Aorta (tissue), 5 donors: ENCODE measurements at regions of chr2 and their contacts with region 1.

Region 1: DNA sequence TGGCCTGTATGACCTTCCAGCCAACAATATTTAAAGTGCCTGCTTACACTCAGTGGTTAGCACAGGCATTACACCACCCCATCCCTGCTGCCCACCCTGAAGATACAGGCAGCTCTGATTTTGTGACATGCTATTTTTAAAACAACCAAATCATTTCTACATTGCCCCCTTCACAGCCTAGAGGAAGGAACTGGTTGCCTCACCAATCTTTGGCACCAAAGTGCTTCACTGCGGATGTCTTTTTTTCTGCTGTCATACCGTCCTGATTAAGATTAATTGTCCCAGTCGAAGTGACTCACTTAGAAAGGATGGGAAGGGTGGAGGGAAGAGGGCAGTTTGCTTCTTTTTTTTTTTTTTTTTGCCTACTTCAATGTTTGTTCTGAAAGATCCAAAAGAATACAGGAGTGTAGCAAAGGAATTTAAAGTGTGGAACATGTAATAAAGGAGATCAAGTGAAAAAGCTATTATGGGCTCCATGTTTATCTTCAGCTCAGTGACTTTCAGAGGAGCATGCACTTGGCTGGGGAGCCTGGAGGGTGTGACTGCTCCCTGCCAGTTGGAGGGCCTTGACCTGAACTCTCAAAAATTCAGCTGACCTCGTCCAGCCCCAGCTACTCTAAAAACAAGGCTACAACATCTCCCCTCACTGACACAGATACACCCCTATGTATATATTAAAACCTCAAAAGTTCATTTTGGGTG is 501.1 kb upstream of the TNP1 start:
- DNase-seq: peak in 1 of 2 donors; percentile 64
- ATAC-seq: peak; percentile 79
- H3K4me3 ChIP-seq: no peak overlapping the region
- H3K27ac ChIP-seq: peak overlapping the region; percentile 92 to 94
- H3K4me1 ChIP-seq: peaks cover 15 to 21% of the 10 kb centered on the region in 2 donors
- H3K27me3 ChIP-seq: no peaks in the 10 kb centered on the region

Region 2: GRCh38 chr2:217223222-217223930 is 137.6 kb before region 1 on chr2:
- intact Hi-C with region 1: loop called in 1 of 2 experiments (anchors 5 kb)
- DNase-seq: peak in 1 of 2 donors; percentile 66
- ATAC-seq: peak; percentile 66
- H3K4me3 ChIP-seq: no peak overlapping the region
- H3K27ac ChIP-seq: peak overlapping the region; percentile 11 to 21
- H3K4me1 ChIP-seq: peaks cover 4 to 6% of the 10 kb centered on the region in 2 donors
- H3K27me3 ChIP-seq: no peaks in the 10 kb centered on the region

Region 3: DNA sequence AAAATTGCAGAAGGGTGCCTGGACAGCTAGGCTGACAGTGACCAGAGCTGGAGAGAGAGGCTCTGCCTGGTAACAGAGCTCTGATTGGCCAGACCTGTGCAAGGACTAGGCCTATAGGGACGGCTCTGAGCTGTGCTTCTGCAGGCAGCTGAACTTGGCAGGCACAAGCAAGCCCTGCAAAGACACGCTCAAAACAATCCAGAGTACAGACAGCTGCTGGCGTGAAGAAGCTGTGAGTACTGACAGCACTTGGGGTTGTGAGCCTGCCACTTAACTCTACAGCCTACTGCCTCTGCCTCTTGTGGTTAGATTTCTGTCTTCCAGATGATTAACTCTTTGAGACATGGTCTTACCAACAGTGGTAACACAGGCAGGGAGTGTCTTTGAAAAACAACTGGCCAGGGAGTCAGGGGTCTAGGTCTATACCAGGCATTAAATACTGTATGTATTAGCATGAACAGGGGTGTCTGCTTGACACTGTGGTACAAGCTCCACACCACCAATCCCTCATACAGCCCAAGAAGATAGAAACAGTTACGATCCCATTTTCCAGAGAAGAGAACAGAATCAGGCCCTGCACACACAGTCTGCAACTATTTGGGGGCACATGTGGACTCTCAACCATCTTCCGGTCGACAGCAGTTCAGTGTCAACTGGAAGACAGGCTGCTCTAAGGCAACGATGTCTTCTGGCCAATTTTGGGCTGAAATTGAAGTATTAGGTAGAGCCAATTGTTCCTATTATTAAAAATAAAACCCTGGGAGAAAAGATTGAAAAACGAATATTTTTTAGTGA is 73.4 kb after region 1 on chr2:
- intact Hi-C with region 1: loop called in 1 of 2 experiments (anchors 5 kb)
- DNase-seq: peak; percentile 91
- ATAC-seq: peak; percentile 94
- H3K4me3 ChIP-seq: peak overlapping the region in 1 of 2 donors; percentile 31
- H3K27ac ChIP-seq: peak overlapping the region in 1 of 2 donors; percentile 11
- H3K4me1 ChIP-seq: peaks cover 9 to 15% of the 10 kb centered on the region in 2 donors
- H3K27me3 ChIP-seq: no peaks in the 10 kb centered on the region

Region 4: GRCh38 chr2:217521820-217522219 is 160.9 kb after region 1 on chr2:
- intact Hi-C with region 1: no loop called
- DNase-seq: no peak
- ATAC-seq: peak; percentile 65
- H3K4me3 ChIP-seq: no peak overlapping the region
- H3K27ac ChIP-seq: no peak overlapping the region
- H3K4me1 ChIP-seq: peaks cover 3% of the 10 kb centered on the region in 2 donors
- H3K27me3 ChIP-seq: no peaks in the 10 kb centered on the region